Activated CD4-positive, alpha-beta memory T cell treated with anti-CD3 and anti-CD28 coated beads, Interleukin-2, amount 10 ng/mL, durations not matched to agents 7 days and 5 days (primary cell): ENCODE measurements at regions of chr6 and their contacts with region 1.

Region 1: GRCh38 chr6:154241591-154241990 is 115.0 kb downstream of the IPCEF1 start:
- DNase-seq: no peak
- H3K4me3 Mint-ChIP-seq: no peak overlapping the region
- H3K27ac Mint-ChIP-seq: peak overlapping the region; percentile 16
- H3K4me1 Mint-ChIP-seq: peaks cover 64% of the 10 kb centered on the region
- H3K27me3 Mint-ChIP-seq: no peaks in the 10 kb centered on the region

Region 2: DNA sequence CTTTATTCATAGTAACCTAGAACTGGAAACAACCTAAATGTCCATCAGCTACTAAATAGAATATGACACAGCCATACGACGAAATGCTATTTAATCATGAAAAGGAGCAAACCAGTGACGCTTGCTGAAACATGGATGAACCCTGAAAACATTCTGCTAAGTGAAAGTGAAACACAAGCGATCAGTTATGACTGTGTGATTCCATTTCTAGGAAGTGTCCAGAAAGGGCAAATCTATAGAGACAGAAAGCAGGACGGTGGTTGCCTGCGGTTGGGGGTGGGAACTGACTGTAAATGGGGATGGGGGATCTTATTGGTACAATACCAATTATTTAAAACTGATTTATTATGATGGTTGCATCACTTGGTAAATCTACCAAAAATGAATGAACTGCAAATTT is 11.8 kb before region 1 on chr6:
- CTCF ChIA-PET with region 1: interaction called, 6 read pairs
- POLR2A ChIA-PET with region 1: interaction called, 116 read pairs
- DNase-seq: peak; percentile 77
- H3K4me3 Mint-ChIP-seq: peak overlapping the region; percentile 71
- H3K27ac Mint-ChIP-seq: peak overlapping the region; percentile 75
- H3K4me1 Mint-ChIP-seq: peaks cover 64% of the 10 kb centered on the region
- H3K27me3 Mint-ChIP-seq: no peaks in the 10 kb centered on the region

Region 3: GRCh38 chr6:154267508-154268106 is 26.0 kb after region 1 on chr6:
- CTCF ChIA-PET with region 1: no interaction called
- POLR2A ChIA-PET with region 1: no interaction called
- DNase-seq: no peak
- H3K4me3 Mint-ChIP-seq: no peak overlapping the region
- H3K27ac Mint-ChIP-seq: no peak overlapping the region
- H3K4me1 Mint-ChIP-seq: no peaks in the 10 kb centered on the region
- H3K27me3 Mint-ChIP-seq: no peaks in the 10 kb centered on the region

Region 4: GRCh38 chr6:154284316-154284853 is 42.8 kb after region 1 on chr6:
- CTCF ChIA-PET with region 1: no interaction called
- POLR2A ChIA-PET with region 1: no interaction called
- DNase-seq: no peak
- H3K4me3 Mint-ChIP-seq: no peak overlapping the region
- H3K27ac Mint-ChIP-seq: no peak overlapping the region
- H3K4me1 Mint-ChIP-seq: no peaks in the 10 kb centered on the region
- H3K27me3 Mint-ChIP-seq: no peaks in the 10 kb centered on the region